ENCODE measurements at regions of chr14 and their contacts with region 1.

Region 1: GRCh38 chr14:77320238-77320935 is at the start of gene POMT2:
- DNase-seq: peak; percentile 90
- H3K4me3 Mint-ChIP-seq: peak within 1 kb of the TSS; percentile 98
- H3K27ac Mint-ChIP-seq: peak within 1 kb of the TSS; percentile 100
- H3K4me1 Mint-ChIP-seq: peaks cover 20% of the 10 kb centered on the region
- H3K27me3 Mint-ChIP-seq: no peaks in the 10 kb centered on the region
- total RNA-seq, gene POMT2: 23.4 and 27.7 TPM in 2 replicates

Region 2: GRCh38 chr14:77151918-77152588 is 168.3 kb before region 1 on chr14:
- intact Hi-C with region 1: loop called (anchors 1 kb)
- DNase-seq: no peak
- H3K4me3 Mint-ChIP-seq: no peak overlapping the region
- H3K27ac Mint-ChIP-seq: no peak overlapping the region
- H3K4me1 Mint-ChIP-seq: no peaks in the 10 kb centered on the region
- H3K27me3 Mint-ChIP-seq: peaks cover 18% of the 10 kb centered on the region

Region 3: DNA sequence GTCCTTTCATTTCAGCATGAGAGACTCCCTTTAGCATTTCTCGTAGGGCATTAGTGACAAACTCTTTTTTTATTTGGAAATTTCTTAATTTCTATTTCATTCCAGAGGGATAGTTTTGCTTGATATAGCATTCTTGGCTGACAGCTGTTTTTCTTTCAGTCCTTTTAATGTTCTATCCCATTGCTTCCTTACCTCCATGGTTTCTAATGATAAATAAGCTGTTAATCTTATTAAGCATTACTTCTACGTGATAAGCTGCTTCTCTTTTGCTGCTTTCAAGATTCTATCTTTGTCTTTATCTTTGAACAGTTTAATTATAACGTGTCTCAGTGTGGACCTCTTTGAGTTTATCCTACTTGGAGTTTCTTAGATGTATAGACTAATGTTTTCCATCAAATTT is 150.3 kb before region 1 on chr14:
- intact Hi-C with region 1: no loop called
- DNase-seq: no peak
- H3K4me3 Mint-ChIP-seq: no peak overlapping the region
- H3K27ac Mint-ChIP-seq: no peak overlapping the region
- H3K4me1 Mint-ChIP-seq: no peaks in the 10 kb centered on the region
- H3K27me3 Mint-ChIP-seq: peaks cover 14% of the 10 kb centered on the region

Region 4: DNA sequence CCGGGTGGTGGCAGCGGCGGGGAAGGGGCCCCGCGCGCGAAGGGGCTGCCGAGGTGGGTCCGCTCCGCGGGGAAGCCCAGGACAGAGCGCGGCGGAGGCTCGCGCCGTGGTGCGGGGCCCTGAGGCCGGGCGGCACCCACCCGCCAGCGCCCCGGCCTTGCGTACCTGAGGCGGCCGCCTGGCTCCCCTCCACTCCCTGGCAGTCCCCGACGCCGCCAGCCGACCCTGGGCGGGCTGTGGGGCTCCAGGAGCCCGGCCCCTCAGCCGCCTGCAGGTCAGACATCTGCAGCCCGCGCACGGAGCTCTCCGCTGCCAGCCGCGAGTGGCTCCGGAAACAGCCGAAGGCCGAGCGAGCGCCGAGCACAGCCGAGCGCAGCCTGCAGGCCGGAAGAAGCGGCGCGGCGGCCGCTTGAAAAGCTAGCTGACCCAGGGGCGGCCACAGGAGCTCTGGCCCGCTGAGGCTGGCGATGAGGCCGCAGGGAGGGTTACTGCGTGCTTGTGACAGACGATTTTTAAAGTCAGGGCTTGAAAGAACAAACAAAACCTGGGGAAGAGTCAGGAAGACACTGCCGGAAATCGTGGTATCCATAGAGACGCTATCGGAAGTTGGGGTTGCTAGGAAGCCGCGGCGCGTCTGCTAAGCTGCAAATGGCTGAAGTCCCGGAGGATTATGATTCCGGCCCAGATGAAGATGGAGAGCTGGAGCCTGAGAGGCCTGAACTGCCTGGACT is 56.5 kb after region 1 on chr14 and contains the starts of genes SAMD15 and TMED8:
- intact Hi-C with region 1: loop called (anchors 1 kb)
- DNase-seq: peak; percentile 80
- H3K4me3 Mint-ChIP-seq: peak within 1 kb of the TSS; percentile 90
- H3K27ac Mint-ChIP-seq: peak within 1 kb of the TSS; percentile 89
- H3K4me1 Mint-ChIP-seq: peaks cover 37% of the 10 kb centered on the region
- H3K27me3 Mint-ChIP-seq: peaks cover 2% of the 10 kb centered on the region
- total RNA-seq, gene SAMD15: 0.41 and 0.57 TPM in 2 replicates
- total RNA-seq, gene TMED8: 28.0 and 29.0 TPM in 2 replicates

Region 5: DNA sequence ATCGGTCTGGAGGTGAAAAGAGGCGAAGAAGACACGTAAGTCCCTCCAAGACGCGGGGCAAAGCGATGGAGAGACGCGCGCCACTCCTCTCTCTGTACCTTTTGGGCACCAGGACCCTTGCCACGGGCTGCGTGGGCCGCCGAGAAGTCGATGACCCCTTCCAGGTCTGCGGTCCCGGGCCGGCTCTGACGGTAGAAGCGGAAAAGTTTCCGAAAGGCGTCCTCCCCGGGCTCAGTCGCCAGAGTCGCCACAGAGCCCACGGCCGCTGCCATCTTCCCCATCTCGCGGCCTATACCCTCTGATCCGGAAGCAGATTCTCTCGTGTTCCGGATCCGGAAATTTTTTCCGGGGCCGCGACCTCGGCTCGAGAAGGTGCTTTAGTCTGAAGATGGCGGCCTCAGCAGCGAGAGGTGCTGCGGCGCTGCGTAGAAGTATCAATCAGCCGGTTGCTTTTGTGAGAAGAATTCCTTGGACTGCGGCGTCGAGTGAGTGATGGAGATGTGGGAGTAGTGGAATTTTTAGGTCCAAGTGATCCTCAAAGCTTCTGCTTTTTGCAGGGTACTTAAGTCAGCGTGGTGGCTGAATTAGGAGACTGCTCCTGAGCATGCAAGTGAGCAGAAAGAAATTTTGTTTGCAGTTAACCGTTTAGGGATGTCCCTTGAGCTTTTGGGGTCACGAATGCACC is 387.5 kb after region 1 on chr14 and contains the starts of genes ALKBH1 and SLIRP:
- intact Hi-C with region 1: loop called (anchors 5 kb)
- DNase-seq: peak; percentile 82
- H3K4me3 Mint-ChIP-seq: peak within 1 kb of the TSS; percentile 95
- H3K27ac Mint-ChIP-seq: peak within 1 kb of the TSS; percentile 93
- H3K4me1 Mint-ChIP-seq: peaks cover 34% of the 10 kb centered on the region
- H3K27me3 Mint-ChIP-seq: no peaks in the 10 kb centered on the region
- total RNA-seq, gene ALKBH1: 14.6 and 15.3 TPM in 2 replicates
- total RNA-seq, gene SLIRP: 133 and 145 TPM in 2 replicates